ENCODE measurements at regions of chr5 and their contacts with region 1.

Region 1: DNA sequence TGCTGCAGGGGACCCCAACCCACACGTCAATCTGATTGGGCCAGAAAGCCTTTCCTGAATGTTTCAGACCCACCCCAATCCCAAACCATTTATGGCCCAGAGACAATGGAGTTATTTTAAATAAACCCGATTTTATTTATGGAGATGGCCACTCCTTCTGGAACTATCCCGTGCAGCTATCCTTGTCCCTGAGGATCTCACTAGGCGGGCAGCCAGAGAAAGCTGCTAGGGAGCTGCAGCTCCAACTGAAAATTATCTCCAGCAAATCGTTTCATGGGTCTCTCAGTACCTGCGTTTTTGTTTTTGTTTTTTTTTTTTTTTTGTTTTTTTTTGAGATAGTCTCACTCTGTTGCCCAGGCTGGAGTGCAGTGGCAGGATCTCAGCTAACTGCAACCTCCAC is 23.0 kb downstream of the C1QTNF2 start:
- DNase-seq: peak; percentile 76
- H3K4me3 ChIP-seq: no peak overlapping the region
- H3K27ac ChIP-seq: peak overlapping the region; percentile 59 to 69
- H3K4me1 ChIP-seq: peaks cover 24% of the 10 kb centered on the region
- H3K27me3 ChIP-seq: no peaks in the 10 kb centered on the region
- CTCF ChIP-seq: no peak
- POLR2A ChIP-seq: no peak

Region 2: DNA sequence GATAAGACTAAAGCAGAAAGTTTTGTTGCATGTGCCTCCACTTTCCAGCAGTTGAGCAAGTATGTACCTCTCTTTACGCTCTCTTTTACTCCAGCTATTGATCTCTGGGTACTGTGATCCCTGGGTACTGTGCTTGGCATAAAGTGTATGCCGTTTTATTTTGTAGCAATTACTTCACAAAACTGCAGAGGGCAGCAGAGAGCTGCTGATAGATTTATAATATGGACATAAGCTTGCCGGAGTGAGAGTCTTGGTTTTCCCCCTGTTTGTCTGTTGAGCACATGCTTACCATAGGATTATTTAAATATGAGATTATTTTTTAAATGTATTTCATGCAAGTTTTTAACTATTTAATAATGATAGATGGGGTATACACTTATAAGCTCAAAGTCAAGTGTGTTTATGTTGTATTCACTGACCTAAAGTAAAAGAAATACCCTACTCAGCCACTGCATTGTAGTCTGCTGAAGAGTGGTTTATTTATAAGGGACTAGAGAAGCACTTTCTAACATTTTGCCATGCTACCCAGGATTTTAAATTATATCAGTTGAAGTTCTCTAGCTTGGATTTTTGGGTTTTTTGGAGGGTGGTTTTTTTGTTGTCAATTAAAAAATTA is 325.5 kb before region 1 on chr5:
- intact Hi-C with region 1: loop called (anchors 5 kb)
- DNase-seq: peak; percentile 66
- H3K4me3 ChIP-seq: no peak overlapping the region
- H3K27ac ChIP-seq: no peak overlapping the region
- H3K4me1 ChIP-seq: no peaks in the 10 kb centered on the region
- H3K27me3 ChIP-seq: no peaks in the 10 kb centered on the region
- CTCF ChIP-seq: peak; percentile 78 to 92 (median 87)
- POLR2A ChIP-seq: no peak

Region 3: GRCh38 chr5:160199410-160199911 is 148.0 kb before region 1 on chr5:
- intact Hi-C with region 1: loop called (anchors 5 kb)
- DNase-seq: peak; percentile 83
- H3K4me3 ChIP-seq: peak overlapping the region; percentile 21 to 45
- H3K27ac ChIP-seq: peak overlapping the region; percentile 66 to 72
- H3K4me1 ChIP-seq: peaks cover 31% of the 10 kb centered on the region
- H3K27me3 ChIP-seq: no peaks in the 10 kb centered on the region
- CTCF ChIP-seq: peak; percentile 94 to 98 (median 96)
- POLR2A ChIP-seq: no peak

Region 4: DNA sequence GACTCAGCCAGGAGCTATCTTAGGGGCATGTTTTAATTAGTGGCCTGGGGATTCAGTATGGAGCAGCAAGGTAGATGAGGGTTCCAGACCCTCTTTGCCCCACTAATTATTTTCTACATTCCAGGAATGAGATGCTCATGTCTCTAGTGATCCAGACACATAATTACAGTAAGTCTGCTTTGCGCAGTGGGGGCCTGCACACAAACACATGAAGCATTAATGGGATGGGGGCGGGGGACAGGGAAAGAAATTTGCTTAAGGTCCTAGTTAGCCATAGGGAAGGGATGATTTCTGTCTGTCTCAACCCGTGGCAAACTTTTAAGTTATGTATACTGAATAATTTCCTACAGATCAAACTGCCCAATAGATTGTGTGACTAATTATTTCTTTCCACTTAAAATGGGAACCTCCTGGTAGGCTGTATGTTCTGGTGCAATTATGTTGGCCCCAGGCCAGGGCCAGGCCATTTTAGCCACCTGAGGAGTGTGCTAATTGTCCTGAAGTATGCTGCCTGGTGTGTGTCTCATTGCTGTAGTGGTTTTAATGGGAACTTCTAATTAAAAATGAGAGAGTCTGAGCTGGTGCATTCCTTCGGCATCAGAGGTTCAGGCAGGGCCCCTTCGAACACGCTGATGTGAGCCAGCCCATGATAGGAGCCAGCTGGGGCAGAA is 208.6 kb after region 1 on chr5:
- intact Hi-C with region 1: no loop called
- DNase-seq: no peak
- H3K4me3 ChIP-seq: no peak overlapping the region
- H3K27ac ChIP-seq: no peak overlapping the region
- H3K4me1 ChIP-seq: peaks cover 4% of the 10 kb centered on the region
- H3K27me3 ChIP-seq: no peaks in the 10 kb centered on the region
- CTCF ChIP-seq: no peak
- POLR2A ChIP-seq: no peak

Measured in testis (tissue), 5 donors.